ENCODE measurements at regions of chr17 and their contacts with region 1.

Region 1: GRCh38 chr17:17280613-17281549 is at the start of gene COPS3:
- DNase-seq: peak; percentile 98
- H3K4me3 Mint-ChIP-seq: peak within 1 kb of the TSS; percentile 94
- H3K27ac Mint-ChIP-seq: peak within 1 kb of the TSS; percentile 98
- H3K4me1 Mint-ChIP-seq: peaks cover 21% of the 10 kb centered on the region
- H3K27me3 Mint-ChIP-seq: no peaks in the 10 kb centered on the region
- CTCF ChIP-seq: no peak
- total RNA-seq, gene COPS3: 67.0 and 91.8 TPM in 2 replicates

Region 2: DNA sequence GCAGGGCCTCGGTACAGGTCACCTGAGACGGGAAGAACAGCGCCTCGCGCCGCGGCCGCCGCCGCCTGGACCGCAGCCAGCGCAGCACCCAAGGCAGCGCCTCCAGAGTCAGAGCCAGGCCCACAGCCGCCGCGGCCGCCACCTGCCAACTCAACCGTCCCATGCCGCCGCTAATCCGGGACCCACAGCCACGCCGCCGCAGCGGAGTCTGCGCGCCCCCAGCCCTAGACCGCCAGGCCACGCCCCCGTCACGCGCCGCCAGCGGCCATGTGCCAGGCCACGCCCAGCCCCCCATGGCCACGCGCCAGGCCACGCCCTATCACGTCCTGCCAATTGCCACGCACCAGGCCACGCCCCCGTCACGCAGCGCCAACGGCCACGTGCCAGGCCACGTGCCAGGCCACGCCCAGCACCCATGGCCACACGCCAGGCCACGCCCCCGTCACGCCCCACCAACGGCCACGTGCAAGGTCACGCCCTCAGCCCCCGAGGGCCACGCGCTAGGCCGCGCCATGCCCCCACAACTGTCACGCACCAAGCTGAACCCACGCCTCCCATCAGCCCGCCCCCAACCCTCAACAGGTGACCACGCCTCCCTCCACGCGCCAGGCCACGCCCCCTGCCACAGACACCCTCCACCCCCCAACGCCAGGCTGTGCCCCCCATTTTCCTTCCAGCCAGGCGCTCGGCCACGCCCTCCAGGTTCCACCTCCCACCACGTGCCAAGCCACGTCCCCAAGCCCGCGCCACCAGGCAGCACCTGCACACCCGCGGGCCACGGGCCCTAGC is 74.6 kb before region 1 on chr17 and contains the start of gene PLD6:
- CTCF ChIA-PET with region 1: no interaction called
- POLR2A ChIA-PET with region 1: interaction called, 12 read pairs
- intact Hi-C with region 1: no loop called
- DNase-seq: peak; percentile 73
- H3K4me3 Mint-ChIP-seq: peak within 1 kb of the TSS; percentile 78
- H3K27ac Mint-ChIP-seq: peak within 1 kb of the TSS; percentile 67
- H3K4me1 Mint-ChIP-seq: peaks cover 19% of the 10 kb centered on the region
- H3K27me3 Mint-ChIP-seq: no peaks in the 10 kb centered on the region
- CTCF ChIP-seq: no peak
- total RNA-seq, gene PLD6: 5.5 and 9.2 TPM in 2 replicates

Region 3: GRCh38 chr17:17237026-17237799 is 43.7 kb before region 1 on chr17 and contains the start of gene FLCN:
- CTCF ChIA-PET with region 1: no interaction called
- POLR2A ChIA-PET with region 1: interaction called, 19 read pairs
- intact Hi-C with region 1: no loop called
- DNase-seq: peak; percentile 81
- H3K4me3 Mint-ChIP-seq: peak within 1 kb of the TSS; percentile 82
- H3K27ac Mint-ChIP-seq: peak within 1 kb of the TSS; percentile 100
- H3K4me1 Mint-ChIP-seq: peaks cover 13% of the 10 kb centered on the region
- H3K27me3 Mint-ChIP-seq: no peaks in the 10 kb centered on the region
- CTCF ChIP-seq: no peak
- total RNA-seq, gene FLCN: 25.6 and 49.7 TPM in 2 replicates

Region 4: GRCh38 chr17:17298108-17298507 is 17.2 kb after region 1 on chr17:
- CTCF ChIA-PET with region 1: no interaction called
- POLR2A ChIA-PET with region 1: interaction called, 16 read pairs
- intact Hi-C with region 1: no loop called
- DNase-seq: no peak
- H3K4me3 Mint-ChIP-seq: no peak overlapping the region
- H3K27ac Mint-ChIP-seq: no peak overlapping the region
- H3K4me1 Mint-ChIP-seq: peaks cover 11% of the 10 kb centered on the region
- H3K27me3 Mint-ChIP-seq: no peaks in the 10 kb centered on the region
- CTCF ChIP-seq: no peak

Measured in MCF 10A (cell line).